Uterus (tissue), 4 donors: ENCODE measurements at regions of chr6 and their contacts with region 1.

Region 1: DNA sequence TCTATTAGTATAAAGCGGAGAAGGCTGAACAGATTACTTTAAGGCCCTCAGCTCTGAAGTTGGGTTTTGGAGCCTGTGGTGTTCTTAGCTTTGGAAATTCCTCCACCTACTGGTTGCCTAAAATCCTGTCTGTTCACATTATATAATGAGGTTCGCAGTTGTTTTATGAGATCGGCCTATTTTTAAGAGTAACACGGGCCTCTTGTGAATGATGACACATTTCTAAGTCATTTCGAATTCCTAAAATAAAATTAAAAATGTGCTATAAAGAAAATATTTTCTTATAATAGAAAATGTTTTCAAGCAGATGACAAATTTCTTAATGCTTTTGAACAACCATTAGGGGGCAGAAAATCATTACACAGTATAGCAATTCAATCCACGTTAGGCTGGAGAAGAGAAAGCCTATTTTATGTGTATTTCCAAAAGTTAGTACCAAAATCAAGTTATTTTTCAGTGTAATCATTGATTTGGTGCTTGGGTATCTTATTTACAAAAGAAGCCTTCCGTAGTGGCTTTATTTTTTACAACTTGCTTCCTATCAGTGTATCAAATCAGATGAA is 15.8 kb upstream of the FAM8A1 start:
- DNase-seq: peak in 1 of 2 donors; percentile 67
- H3K4me3 ChIP-seq: no peak overlapping the region
- H3K27ac ChIP-seq: peak overlapping the region; percentile 77 to 92
- H3K4me1 ChIP-seq: no peaks in the 10 kb centered on the region
- H3K27me3 ChIP-seq: no peaks in the 10 kb centered on the region
- CTCF ChIP-seq: peak; percentile 83 to 97 (median 94)
- POLR2A ChIP-seq: no peak

Region 2: DNA sequence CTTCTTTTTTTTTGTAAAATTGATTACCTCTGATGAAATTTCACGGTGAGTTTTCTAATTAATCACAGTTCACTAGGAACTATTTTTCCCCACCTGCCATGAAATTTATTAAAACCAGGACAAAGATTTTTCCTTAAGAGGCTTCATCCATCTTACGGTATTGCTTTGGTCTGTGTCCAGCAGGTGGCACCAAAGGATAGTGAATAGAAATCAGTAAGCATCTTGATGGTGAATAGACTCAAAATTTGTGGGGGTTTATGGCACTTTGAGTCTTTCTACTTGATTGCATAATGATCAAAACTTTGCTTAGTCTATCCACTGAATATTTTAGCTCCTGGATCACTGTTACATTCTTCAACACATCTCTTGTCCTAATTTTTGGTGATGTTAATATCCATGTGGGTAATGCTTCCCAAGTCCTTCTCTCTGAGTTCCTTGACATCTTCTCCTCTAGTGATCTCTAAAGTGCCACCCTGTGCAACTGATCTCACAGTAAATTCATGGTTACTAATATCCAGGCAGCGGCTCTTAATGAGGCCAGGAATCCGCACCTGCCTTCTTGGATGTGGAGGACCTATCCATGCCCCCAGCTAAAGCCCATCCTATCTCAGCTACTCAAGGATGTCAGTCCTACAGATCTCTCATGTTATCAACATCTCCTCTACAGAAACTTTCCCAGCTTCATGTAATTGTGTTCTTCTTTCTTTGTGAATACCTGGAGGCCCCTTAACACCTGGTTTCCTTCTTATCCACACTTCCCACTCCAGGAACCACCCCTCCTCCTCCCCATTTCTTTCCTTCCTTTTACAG is 428.0 kb before region 1 on chr6:
- intact Hi-C with region 1: loop called (anchors 10 kb)
- DNase-seq: peak; percentile 53 to 79
- H3K4me3 ChIP-seq: no peak overlapping the region
- H3K27ac ChIP-seq: no peak overlapping the region
- H3K4me1 ChIP-seq: no peaks in the 10 kb centered on the region
- H3K27me3 ChIP-seq: no peaks in the 10 kb centered on the region
- CTCF ChIP-seq: peak; percentile 71 to 89 (median 82)
- POLR2A ChIP-seq: no peak